ENCODE measurements at regions of chr3 and their contacts with region 1.

Region 1: DNA sequence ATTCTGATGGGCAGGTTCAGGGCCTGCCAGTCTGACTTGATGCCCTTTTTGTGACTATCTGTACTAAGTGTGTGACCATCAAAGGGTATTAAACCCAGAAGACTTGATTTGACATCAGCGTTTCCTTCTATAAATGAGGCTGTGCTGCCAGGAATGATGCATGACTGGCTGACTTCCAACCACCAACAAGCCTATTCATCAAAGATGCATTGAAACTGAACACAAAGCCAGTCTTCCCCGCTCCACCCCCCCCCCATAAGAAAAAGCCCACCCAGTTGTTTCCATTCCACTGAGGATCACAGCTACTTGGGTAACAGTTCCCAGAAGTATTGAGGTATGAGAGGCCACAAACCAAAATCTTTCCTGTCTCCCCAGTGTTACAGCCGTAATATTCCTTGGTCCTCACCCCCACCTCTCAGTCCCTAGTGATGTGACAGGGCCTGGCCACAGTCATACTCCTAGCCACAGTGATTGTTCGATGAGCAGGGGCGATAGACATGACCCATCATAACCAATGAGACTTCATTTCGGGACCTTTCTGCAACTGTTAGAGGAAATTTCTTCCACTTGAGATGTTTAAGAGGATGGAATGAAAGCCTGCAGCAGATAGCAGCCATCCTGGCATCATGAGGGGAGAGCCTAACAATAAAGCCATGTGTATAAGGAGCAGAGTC is 22.6 kb downstream of the SH3BP5 start:
- DNase-seq: no peak
- H3K4me3 Mint-ChIP-seq: peak overlapping the region; percentile 48
- H3K27ac Mint-ChIP-seq: peak overlapping the region; percentile 94
- H3K4me1 Mint-ChIP-seq: peaks cover 52% of the 10 kb centered on the region
- H3K27me3 Mint-ChIP-seq: no peaks in the 10 kb centered on the region

Region 2: DNA sequence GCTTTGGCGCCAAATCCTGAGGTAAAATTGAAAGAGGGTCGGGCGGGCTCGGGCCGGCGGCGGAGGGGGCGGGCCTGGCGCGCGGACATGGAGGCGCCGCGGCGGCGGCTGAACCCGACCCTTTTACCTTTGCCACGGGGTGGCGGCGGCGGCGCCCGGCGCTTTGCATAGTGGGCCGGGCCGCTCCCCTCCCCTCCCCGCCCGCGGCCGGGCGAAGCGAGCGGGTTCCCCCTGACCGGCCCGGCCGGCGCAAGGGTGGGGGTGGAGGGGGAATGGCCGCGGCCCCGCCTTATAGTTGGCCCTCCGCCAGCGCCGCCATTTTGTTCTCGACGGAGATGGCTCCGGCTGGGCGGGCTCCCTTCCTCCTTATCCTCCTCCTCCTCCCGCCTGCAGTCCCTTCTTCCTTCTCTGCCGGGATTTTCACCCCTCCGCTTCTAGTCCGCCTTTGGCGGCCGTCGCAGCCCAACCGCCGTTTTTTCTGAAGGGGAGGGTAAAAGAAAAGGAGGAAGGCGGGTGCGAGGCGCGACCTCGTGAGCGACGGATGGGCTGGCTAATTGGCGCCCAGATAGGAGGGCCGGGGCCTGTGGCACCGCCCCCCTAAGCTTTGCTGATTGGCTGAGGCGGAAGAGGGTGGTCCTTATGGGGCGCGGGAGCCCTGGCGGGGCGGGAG is 361.8 kb before region 1 on chr3:
- intact Hi-C with region 1: loop called (anchors 5 kb)
- DNase-seq: peak; percentile 94
- H3K4me3 Mint-ChIP-seq: peak overlapping the region; percentile 99
- H3K27ac Mint-ChIP-seq: peak overlapping the region; percentile 100
- H3K4me1 Mint-ChIP-seq: peaks cover 36% of the 10 kb centered on the region
- H3K27me3 Mint-ChIP-seq: no peaks in the 10 kb centered on the region

Region 3: GRCh38 chr3:15228147-15228546 is 81.7 kb before region 1 on chr3:
- intact Hi-C with region 1: no loop called
- DNase-seq: no peak
- H3K4me3 Mint-ChIP-seq: no peak overlapping the region
- H3K27ac Mint-ChIP-seq: no peak overlapping the region
- H3K4me1 Mint-ChIP-seq: peaks cover 4% of the 10 kb centered on the region
- H3K27me3 Mint-ChIP-seq: no peaks in the 10 kb centered on the region

Region 4: DNA sequence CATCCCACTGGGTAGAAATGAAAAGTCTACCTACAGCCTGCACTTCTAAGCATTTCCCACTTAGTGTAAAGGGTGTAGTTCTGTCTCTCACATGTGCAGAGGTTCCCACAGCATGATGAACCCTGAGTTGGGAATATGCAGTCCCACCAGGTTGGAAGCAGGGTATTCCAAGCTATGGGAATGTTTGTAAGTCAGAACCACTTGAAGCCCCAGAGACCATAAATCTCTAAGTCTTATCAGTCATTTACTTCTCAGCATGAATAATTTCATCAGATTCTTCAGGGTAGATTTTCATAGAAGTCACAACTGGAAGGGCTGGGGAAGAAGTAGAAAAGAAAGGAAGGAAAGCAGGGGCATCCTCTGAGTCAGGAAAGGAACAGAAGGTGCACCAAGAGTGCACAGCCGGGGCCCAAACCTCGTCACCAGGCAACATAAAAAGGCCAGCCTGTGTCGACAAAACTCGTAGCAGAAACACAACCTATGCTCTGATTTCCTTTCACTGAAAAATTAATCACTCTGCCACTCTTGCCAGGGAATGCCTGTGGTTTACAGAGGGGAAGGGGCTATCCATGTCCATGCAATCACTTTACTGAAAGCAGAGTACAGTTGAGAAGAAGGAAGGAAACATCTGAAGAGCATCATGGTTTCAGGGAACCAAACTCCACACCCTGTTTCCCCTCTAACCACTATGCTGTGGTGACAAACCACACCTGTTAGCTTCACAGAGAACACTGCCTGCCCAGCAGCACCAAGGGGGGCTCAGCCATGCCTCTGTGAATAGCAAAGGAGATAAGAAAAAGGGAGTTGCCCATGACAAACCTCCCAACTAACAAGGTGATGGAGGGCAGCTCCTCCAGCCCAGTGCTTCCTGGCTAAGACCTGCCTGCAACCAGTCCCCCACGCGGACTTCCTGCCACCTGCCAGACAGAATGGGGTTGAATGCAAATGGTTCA is 17.9 kb before region 1 on chr3:
- intact Hi-C with region 1: loop called (anchors 1 kb)
- DNase-seq: peak; percentile 69
- H3K4me3 Mint-ChIP-seq: peak overlapping the region; percentile 31
- H3K27ac Mint-ChIP-seq: peak overlapping the region; percentile 74
- H3K4me1 Mint-ChIP-seq: peaks cover 50% of the 10 kb centered on the region
- H3K27me3 Mint-ChIP-seq: no peaks in the 10 kb centered on the region

Region 5: DNA sequence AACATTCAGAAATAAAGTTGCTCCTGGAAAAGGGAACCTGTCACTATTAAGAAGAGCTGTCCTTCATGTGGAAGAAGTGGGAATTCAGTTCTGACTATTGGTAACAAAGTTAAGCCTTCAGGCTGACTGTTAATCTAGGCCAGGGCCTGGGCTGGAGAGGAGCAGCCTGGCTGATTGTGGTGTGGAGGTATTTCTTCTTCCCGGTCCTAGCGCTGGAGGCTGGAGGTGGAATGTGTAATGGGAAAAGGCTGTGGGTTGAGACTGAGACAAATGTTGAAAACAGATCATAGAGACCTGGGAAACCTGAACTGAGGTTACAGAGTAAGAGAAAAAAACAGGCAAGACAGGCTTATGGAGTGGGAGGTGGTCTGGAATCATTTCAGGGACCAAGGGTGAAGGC is 46.4 kb after region 1 on chr3:
- intact Hi-C with region 1: loop called (anchors 1 kb)
- DNase-seq: no peak
- H3K4me3 Mint-ChIP-seq: peak overlapping the region; percentile 24
- H3K27ac Mint-ChIP-seq: peak overlapping the region; percentile 85
- H3K4me1 Mint-ChIP-seq: peaks cover 34% of the 10 kb centered on the region
- H3K27me3 Mint-ChIP-seq: no peaks in the 10 kb centered on the region

Region 6: GRCh38 chr3:15377961-15378791 is 68.4 kb after region 1 on chr3:
- intact Hi-C with region 1: loop called (anchors 1 kb)
- DNase-seq: peak; percentile 92
- H3K4me3 Mint-ChIP-seq: no peak overlapping the region
- H3K27ac Mint-ChIP-seq: peak overlapping the region; percentile 76
- H3K4me1 Mint-ChIP-seq: peaks cover 10% of the 10 kb centered on the region
- H3K27me3 Mint-ChIP-seq: no peaks in the 10 kb centered on the region